ENCODE measurements at regions of chr18 and their contacts with region 1.

Region 1: GRCh38 chr18:3129053-3129864 is 90.5 kb downstream of the MYOM1 start:
- DNase-seq: peak; percentile 60 to 80
- ATAC-seq: peak; percentile 98 to 100
- H3K4me3 ChIP-seq: no peak overlapping the region
- H3K27ac ChIP-seq: no peak overlapping the region
- H3K4me1 ChIP-seq: no peaks in the 10 kb centered on the region; the same call in 2 of the 3 replicates
- CTCF ChIP-seq: peak; percentile 62
- EP300 ChIP-seq: no peak
- POLR2A ChIP-seq: no peak
- RAD21 ChIP-seq: peak; percentile 59 to 65

Region 2: GRCh38 chr18:3012964-3013804 is 116.1 kb before region 1 on chr18 and contains the start of gene LPIN2:
- CTCF ChIA-PET with region 1: interaction called, 10 read pairs
- POLR2A ChIA-PET with region 1: no interaction called
- DNase-seq: peak; percentile 80 to 92
- ATAC-seq: peak; percentile 83 to 89
- H3K4me3 ChIP-seq: peak within 1 kb of the TSS; percentile 99
- H3K27ac ChIP-seq: peak within 1 kb of the TSS; percentile 99 to 100
- H3K4me1 ChIP-seq: peaks cover 36% of the 10 kb centered on the region
- CTCF ChIP-seq: no peak
- EP300 ChIP-seq: no peak
- POLR2A ChIP-seq: no peak
- RAD21 ChIP-seq: no peak
- polyA plus RNA-seq, gene LPIN2: 21.1 and 23.7 TPM in 2 replicates

Region 3: DNA sequence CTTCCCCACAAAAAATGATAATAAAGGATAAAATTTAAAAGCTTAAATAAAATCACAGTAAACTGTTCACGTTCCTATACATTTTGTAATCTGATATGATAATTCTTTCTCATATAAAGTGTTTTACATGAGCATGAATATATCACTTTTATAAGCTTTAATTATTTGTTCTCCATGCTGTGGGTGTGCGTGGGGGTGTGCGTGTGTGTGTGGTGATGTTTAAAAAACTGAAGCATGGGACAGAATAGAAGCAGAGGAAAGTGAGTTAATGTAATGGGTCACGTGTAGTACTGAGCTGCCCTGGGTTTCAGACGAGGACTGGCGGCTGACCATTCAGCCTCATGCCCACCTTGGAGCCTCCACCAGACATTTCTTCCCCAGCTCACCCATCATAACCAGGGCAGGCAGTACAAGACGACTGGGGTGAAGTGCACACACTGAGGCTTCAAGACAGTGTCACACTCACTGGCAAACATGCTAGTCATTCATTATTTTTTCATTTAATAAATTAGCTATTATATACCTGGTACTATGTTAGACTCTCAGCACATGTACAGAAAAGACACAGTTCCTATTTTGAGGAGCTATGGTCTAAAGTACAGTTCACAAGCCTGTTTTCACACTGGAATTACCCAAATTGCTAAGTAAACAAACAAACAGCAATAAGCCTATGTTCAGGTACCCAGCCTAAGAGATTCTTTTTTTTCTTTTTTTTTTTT is 19.1 kb before region 1 on chr18:
- CTCF ChIA-PET with region 1: interaction called, 13 read pairs
- POLR2A ChIA-PET with region 1: no interaction called
- DNase-seq: no peak
- ATAC-seq: no peak
- H3K4me3 ChIP-seq: no peak overlapping the region
- H3K27ac ChIP-seq: no peak overlapping the region
- H3K4me1 ChIP-seq: no peaks in the 10 kb centered on the region; the same call in 2 of the 3 replicates
- CTCF ChIP-seq: no peak
- EP300 ChIP-seq: no peak
- POLR2A ChIP-seq: no peak
- RAD21 ChIP-seq: no peak

Region 4: DNA sequence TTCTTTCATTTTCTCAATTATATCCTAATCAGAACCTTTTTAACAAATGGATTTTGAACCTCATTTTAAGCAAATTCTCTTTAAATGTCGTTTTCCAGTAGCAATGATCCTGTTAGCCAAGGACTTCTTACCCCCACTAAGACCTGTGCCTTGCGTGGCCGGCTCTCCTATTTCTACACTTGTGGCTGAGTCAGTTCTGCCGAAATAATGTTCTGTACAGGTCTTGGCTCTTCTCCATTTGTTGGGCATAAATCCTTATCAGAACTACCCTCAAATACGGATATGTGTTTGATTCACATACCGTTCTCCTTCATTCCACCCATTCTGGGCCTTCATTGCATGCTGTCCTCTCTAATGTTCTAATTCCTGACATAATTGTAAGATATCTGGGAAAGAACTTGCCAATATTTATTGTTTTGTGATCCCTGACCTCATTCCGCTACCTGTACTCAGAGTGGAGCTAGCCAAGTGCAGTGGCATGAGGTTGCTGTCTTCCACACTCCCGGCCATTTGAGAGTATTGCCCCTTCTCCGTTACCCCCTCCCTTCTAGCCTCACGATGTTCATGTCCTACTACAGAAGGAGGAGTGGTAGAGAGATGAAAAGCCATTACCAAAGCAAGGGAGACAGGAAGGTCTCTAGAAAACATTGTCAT is 11.9 kb after region 1 on chr18:
- CTCF ChIA-PET with region 1: interaction called, 18 read pairs
- POLR2A ChIA-PET with region 1: no interaction called
- DNase-seq: no peak
- ATAC-seq: no peak
- H3K4me3 ChIP-seq: no peak overlapping the region
- H3K27ac ChIP-seq: no peak overlapping the region
- H3K4me1 ChIP-seq: no peaks in the 10 kb centered on the region
- CTCF ChIP-seq: no peak
- EP300 ChIP-seq: no peak
- POLR2A ChIP-seq: no peak
- RAD21 ChIP-seq: no peak

Measured in A549 (cell line).